Panc1 (cell line): ENCODE measurements at regions of chr11 and their contacts with region 1.

Region 1: DNA sequence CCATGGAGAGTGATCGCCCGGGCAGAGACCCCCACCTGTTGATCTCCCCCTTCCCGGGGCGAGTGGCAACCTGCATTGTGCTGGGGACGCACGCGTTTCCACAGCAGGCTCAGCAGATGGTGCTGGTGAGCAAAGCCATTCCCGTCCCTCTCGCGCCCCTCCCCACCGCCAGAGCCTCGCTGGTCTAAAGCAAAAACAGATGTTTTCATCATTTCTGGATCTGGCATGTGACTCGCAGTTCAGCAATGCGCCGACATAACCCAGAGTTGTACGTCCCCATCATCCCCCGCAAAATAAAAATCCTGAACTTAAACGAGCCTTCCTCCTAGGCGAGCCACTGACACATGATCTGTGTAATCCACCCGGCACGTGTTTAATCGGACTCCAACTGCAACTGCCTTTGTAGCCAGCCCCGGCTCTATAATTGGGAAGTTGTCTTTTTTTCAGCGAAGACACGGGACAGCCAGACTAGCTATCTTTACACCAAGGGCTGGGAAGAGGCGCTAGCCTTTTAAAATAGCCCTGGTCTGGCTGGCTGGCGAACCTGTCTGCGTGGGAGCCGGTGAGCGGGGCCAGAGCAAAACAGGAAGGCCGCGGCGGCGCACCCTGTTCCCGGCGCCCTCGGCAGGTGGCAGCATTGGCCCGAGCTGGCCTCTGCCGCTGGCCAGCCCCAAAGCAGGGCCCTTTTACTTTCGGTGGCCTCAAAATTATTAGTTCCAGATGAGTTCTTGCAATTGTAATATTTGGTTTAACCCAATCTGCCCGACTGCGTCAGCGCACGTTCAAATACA is 203.0 kb upstream of the SORL1-AS1 start:
- DNase-seq: peak; percentile 73
- ATAC-seq: peak; percentile 96
- H3K4me3 ChIP-seq: peak overlapping the region; percentile 60 to 82
- H3K27ac ChIP-seq: peak overlapping the region; percentile 79
- H3K4me1 ChIP-seq: peaks cover 17% of the 10 kb centered on the region
- H3K27me3 ChIP-seq: no peaks in the 10 kb centered on the region
- CTCF ChIP-seq: peak; percentile 98

Region 2: GRCh38 chr11:121722431-121723245 is 66.9 kb after region 1 on chr11:
- CTCF ChIA-PET with region 1: no interaction called
- POLR2A ChIA-PET with region 1: no interaction called
- in situ Hi-C with region 1: no loop called
- intact Hi-C with region 1: no loop called
- DNase-seq: no peak
- ATAC-seq: peak; percentile 93
- H3K4me3 ChIP-seq: peak overlapping the region; percentile 39 to 59
- H3K27ac ChIP-seq: peak overlapping the region; percentile 32; the same call in 1 of the 2 replicates
- H3K4me1 ChIP-seq: peaks cover 12% of the 10 kb centered on the region; the same call in 1 of the 2 replicates
- H3K27me3 ChIP-seq: no peaks in the 10 kb centered on the region
- CTCF ChIP-seq: no peak

Region 3: DNA sequence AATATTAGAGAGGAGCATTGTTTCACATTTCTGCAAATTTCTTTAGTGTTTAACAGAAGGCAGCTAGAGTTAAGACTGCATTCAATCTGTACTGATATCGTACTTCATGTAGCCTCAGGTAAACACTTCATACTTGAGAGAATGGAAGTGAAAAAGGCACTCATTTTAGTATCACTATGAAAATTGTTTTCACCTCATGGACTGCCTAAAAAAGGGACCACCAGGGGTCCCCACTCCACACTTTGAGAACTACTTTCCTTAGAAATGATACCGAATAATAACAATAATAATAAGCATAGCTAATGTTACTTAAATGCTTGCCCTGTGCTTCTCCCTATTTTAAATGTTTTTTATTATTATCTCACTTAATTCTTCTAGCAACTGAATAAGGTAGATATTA is 365.2 kb after region 1 on chr11:
- CTCF ChIA-PET with region 1: no interaction called
- POLR2A ChIA-PET with region 1: no interaction called
- in situ Hi-C with region 1: no loop called
- intact Hi-C with region 1: loop called (anchors 10 kb)
- DNase-seq: no peak
- ATAC-seq: no peak
- H3K4me3 ChIP-seq: no peak overlapping the region
- H3K27ac ChIP-seq: no peak overlapping the region
- H3K4me1 ChIP-seq: no peaks in the 10 kb centered on the region
- H3K27me3 ChIP-seq: no peaks in the 10 kb centered on the region
- CTCF ChIP-seq: peak; percentile 62; the same call in 1 of the 2 replicates

Region 4: GRCh38 chr11:122101625-122102291 is 446.0 kb after region 1 on chr11:
- CTCF ChIA-PET with region 1: interaction called, 5 read pairs
- POLR2A ChIA-PET with region 1: no interaction called
- in situ Hi-C with region 1: no loop called
- intact Hi-C with region 1: loop called (anchors 1 kb)
- DNase-seq: no peak
- ATAC-seq: peak; percentile 57
- H3K4me3 ChIP-seq: peak overlapping the region; percentile 19 to 43; a peak in 3 of 4 replicates
- H3K27ac ChIP-seq: peak overlapping the region; percentile 80
- H3K4me1 ChIP-seq: peaks cover 3% of the 10 kb centered on the region
- H3K27me3 ChIP-seq: no peaks in the 10 kb centered on the region
- CTCF ChIP-seq: peak; percentile 76

Region 5: GRCh38 chr11:122159173-122159721 is 503.5 kb after region 1 on chr11:
- CTCF ChIA-PET with region 1: interaction called, 3 read pairs
- POLR2A ChIA-PET with region 1: no interaction called
- in situ Hi-C with region 1: no loop called
- intact Hi-C with region 1: loop called (anchors 5 kb)
- DNase-seq: no peak
- ATAC-seq: peak; percentile 47
- H3K4me3 ChIP-seq: peak overlapping the region; percentile 44 to 73
- H3K27ac ChIP-seq: peak overlapping the region; percentile 98
- H3K4me1 ChIP-seq: peaks cover 52% of the 10 kb centered on the region
- H3K27me3 ChIP-seq: no peaks in the 10 kb centered on the region
- CTCF ChIP-seq: no peak

Region 6: GRCh38 chr11:122202951-122203456 is 547.3 kb after region 1 on chr11:
- CTCF ChIA-PET with region 1: interaction called, 11 read pairs
- POLR2A ChIA-PET with region 1: interaction called, 3 read pairs
- in situ Hi-C with region 1: no loop called
- intact Hi-C with region 1: loop called (anchors 1 kb)
- DNase-seq: no peak
- ATAC-seq: peak; percentile 93
- H3K4me3 ChIP-seq: peak overlapping the region; percentile 40 to 60
- H3K27ac ChIP-seq: peak overlapping the region; percentile 78
- H3K4me1 ChIP-seq: peaks cover 10% of the 10 kb centered on the region
- H3K27me3 ChIP-seq: no peaks in the 10 kb centered on the region
- CTCF ChIP-seq: peak; percentile 100

Region 7: DNA sequence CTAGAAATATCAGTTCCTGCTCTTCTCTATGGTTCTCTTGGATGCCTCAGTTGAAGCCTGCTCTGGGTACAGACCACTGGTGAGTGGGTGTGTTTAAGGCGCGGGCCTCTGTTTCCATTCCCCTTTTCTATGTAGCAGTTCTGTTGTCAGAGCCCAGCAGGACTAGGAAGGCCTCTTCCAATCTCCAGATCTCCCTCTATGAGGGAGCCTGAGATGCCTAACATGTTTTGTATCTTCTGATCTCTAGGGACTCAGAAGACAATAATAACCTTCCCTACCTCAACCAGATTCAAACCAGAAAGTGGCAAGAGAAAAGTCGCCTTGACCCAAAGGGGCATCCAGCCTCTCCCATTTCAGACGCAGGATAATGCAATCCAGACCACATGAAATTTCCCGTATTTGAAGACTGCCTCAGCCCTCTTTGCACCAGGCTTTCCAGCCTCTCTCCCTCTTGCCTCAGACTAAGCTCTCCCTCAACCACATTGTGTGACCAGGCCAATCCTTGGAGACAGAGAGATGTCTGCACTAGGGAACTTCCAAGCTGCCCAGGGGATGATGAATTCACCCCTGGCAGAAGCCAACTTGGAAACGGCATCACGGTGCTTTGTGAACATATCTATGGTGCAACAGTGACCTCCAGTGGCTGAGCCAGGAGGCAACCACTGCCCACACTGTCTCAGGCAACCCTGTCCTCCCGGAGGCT is 849.7 kb after region 1 on chr11:
- CTCF ChIA-PET with region 1: interaction called, 5 read pairs
- POLR2A ChIA-PET with region 1: no interaction called
- in situ Hi-C with region 1: no loop called
- intact Hi-C with region 1: loop called (anchors 1 kb)
- DNase-seq: peak; percentile 79
- ATAC-seq: peak; percentile 99
- H3K4me3 ChIP-seq: no peak overlapping the region
- H3K27ac ChIP-seq: no peak overlapping the region
- H3K4me1 ChIP-seq: no peaks in the 10 kb centered on the region
- H3K27me3 ChIP-seq: peaks cover 10% of the 10 kb centered on the region
- CTCF ChIP-seq: peak; percentile 88